Panc1 (cell line): ENCODE measurements at regions of chr15 and their contacts with region 1.

Region 1: GRCh38 chr15:91311986-91312385 is 211.9 kb downstream of the SV2B start:
- DNase-seq: no peak
- ATAC-seq: no peak
- H3K4me3 ChIP-seq: no peak overlapping the region
- H3K27ac ChIP-seq: no peak overlapping the region
- H3K4me1 ChIP-seq: no peaks in the 10 kb centered on the region
- H3K27me3 ChIP-seq: peaks cover 18% of the 10 kb centered on the region
- CTCF ChIP-seq: no peak

Region 2: DNA sequence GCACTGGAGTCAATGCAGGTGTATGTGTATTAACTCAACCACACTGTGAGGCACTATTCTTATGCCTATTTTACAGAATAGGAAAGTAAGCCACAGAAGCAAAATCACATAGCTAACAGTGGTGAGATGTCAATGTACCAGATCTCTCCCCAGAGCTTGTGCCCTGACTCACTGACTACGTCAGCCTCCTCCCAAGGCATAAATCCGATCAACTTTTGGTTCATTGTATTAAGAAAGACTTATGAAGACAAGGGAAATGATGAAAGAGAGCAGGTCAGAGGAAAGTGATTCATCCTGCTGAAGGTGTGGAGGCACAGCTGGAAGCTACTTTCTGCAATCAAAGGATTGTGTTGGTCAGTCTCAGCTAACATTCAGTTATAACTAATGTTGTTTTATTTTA is 245.0 kb before region 1 on chr15:
- CTCF ChIA-PET with region 1: no interaction called
- POLR2A ChIA-PET with region 1: no interaction called
- in situ Hi-C with region 1: no loop called
- intact Hi-C with region 1: no loop called
- DNase-seq: no peak
- ATAC-seq: no peak
- H3K4me3 ChIP-seq: no peak overlapping the region
- H3K27ac ChIP-seq: no peak overlapping the region
- H3K4me1 ChIP-seq: no peaks in the 10 kb centered on the region
- H3K27me3 ChIP-seq: peaks cover 10% of the 10 kb centered on the region
- CTCF ChIP-seq: no peak

Region 3: DNA sequence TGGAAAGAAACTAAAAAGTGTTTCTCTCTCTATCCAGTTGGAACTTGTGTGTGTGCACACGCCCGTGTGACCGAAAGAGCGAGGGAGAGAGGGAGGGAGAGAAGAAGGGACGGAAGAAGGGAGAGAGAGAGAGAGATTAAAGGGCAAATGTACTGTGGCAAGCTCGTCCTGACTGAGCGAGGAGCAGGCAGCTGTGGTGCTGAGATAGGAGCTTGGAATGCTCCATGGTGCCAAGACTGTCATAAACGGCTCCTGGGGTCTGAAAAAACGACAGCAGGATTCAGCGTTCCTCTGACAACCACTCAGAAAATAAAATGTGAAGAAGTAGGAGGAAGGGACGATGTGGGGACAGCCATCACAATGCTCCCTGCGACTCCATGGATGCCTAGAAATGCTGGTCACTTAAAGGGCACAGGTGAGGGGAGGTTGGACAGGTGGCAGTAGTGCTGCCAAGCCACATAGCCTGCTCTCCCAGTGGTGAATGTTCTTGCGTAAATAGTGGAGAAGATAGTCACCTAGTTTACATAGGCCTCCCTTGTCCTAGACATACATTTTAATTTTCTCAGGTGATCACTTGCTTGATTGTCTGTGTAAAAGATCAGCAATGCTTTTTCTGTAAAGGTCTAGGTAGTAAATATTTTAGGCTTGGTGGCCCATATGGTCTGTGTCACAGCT is 64.2 kb after region 1 on chr15:
- CTCF ChIA-PET with region 1: no interaction called
- POLR2A ChIA-PET with region 1: no interaction called
- in situ Hi-C with region 1: no loop called
- intact Hi-C with region 1: no loop called
- DNase-seq: no peak
- ATAC-seq: no peak
- H3K4me3 ChIP-seq: no peak overlapping the region
- H3K27ac ChIP-seq: no peak overlapping the region
- H3K4me1 ChIP-seq: no peaks in the 10 kb centered on the region
- H3K27me3 ChIP-seq: peaks cover 8% of the 10 kb centered on the region
- CTCF ChIP-seq: no peak

Region 4: GRCh38 chr15:91522663-91523332 is 210.8 kb after region 1 on chr15:
- CTCF ChIA-PET with region 1: no interaction called
- POLR2A ChIA-PET with region 1: no interaction called
- in situ Hi-C with region 1: no loop called
- intact Hi-C with region 1: no loop called
- DNase-seq: no peak
- ATAC-seq: no peak
- H3K4me3 ChIP-seq: no peak overlapping the region
- H3K27ac ChIP-seq: no peak overlapping the region
- H3K4me1 ChIP-seq: no peaks in the 10 kb centered on the region
- H3K27me3 ChIP-seq: no peaks in the 10 kb centered on the region
- CTCF ChIP-seq: 0 out of 2 replicates have a peak, but pooled peaks have one; percentile 4

Region 5: DNA sequence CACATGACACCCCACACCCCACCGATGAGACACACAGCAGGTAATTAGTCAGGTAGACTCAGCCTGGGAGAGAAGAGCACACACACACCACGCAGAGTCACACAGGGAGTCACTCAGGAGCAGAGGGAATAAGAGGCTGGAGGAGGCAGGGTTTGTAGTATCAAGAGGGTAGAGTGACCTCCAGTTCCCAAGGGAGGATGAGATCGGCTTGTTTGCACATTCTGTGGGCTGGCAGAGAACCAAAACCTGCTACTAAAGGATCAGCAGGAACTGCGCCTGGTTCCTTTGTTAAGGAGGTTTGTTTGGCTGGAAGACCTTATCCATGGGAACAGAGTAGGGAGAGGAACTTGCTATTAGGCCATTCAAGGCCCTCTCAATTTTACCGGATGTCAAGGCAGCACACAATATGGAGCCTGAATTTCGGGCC is 260.1 kb after region 1 on chr15:
- CTCF ChIA-PET with region 1: no interaction called
- POLR2A ChIA-PET with region 1: no interaction called
- in situ Hi-C with region 1: no loop called
- intact Hi-C with region 1: no loop called
- DNase-seq: no peak
- ATAC-seq: no peak
- H3K4me3 ChIP-seq: no peak overlapping the region
- H3K27ac ChIP-seq: no peak overlapping the region
- H3K4me1 ChIP-seq: no peaks in the 10 kb centered on the region
- H3K27me3 ChIP-seq: no peaks in the 10 kb centered on the region
- CTCF ChIP-seq: no peak

Region 6: GRCh38 chr15:91603384-91604080 is 291.5 kb after region 1 on chr15:
- CTCF ChIA-PET with region 1: no interaction called
- POLR2A ChIA-PET with region 1: no interaction called
- in situ Hi-C with region 1: no loop called
- intact Hi-C with region 1: loop called (anchors 10 kb)
- DNase-seq: no peak
- ATAC-seq: no peak
- H3K4me3 ChIP-seq: no peak overlapping the region
- H3K27ac ChIP-seq: no peak overlapping the region
- H3K4me1 ChIP-seq: no peaks in the 10 kb centered on the region
- H3K27me3 ChIP-seq: peaks cover 2% of the 10 kb centered on the region; the same call in 1 of the 2 replicates
- CTCF ChIP-seq: no peak

Region 7: DNA sequence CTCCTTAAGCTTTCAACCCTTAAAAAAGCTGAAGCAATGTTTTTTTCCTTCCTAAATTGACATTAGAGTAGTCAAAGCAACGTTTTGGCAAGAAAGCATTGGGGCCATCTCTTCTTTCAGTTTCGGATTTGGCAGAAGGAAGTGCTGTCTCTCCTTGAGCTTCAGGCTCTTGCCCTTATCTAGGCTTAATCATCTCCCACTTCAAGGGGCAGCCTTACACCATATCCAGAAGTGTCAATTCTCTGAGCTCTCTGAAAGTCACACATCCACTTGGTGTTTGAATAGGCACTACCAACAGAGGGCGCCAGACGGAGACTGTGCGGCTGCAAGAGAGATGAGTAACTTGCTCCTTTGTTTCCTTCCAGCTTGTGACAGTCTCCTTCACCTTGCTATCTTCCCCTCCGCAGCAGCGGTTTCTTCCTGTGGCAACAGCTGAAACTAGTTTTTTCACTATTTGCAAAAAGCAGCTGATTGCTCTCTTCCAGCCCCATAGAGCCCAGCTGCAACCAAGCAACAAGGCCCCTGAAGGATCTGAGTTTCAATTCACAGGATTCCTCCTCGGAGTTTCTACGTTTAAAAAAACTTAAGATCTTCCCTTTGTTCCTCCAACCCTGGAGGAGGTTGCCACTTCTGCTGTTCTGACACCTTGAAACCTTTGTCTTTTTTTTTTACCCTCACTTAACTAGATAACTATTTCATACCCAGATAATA is 394.5 kb after region 1 on chr15:
- CTCF ChIA-PET with region 1: no interaction called
- POLR2A ChIA-PET with region 1: no interaction called
- in situ Hi-C with region 1: no loop called
- intact Hi-C with region 1: loop called (anchors 5 kb)
- DNase-seq: peak; percentile 12
- ATAC-seq: peak; percentile 78
- H3K4me3 ChIP-seq: no peak overlapping the region
- H3K27ac ChIP-seq: no peak overlapping the region
- H3K4me1 ChIP-seq: no peaks in the 10 kb centered on the region
- H3K27me3 ChIP-seq: no peaks in the 10 kb centered on the region; the same call in 1 of the 2 replicates
- CTCF ChIP-seq: peak; percentile 90